PC-9 (cell line): ENCODE measurements at regions of chr3 and their contacts with region 1.

Region 1: GRCh38 chr3:96209695-96210094 is 604.7 kb upstream of the EPHA6 start:
- DNase-seq: peak in 1 of 2 experiments; percentile 49
- H3K4me3 ChIP-seq: no peak overlapping the region
- H3K27ac ChIP-seq: peak overlapping the region; percentile 14; the same call in 1 of the 2 replicates
- H3K4me1 ChIP-seq: peaks cover 8% of the 10 kb centered on the region; the same call in 1 of the 2 replicates
- H3K27me3 ChIP-seq: no peaks in the 10 kb centered on the region
- CTCF ChIP-seq: no peak

Region 2: GRCh38 chr3:95350049-95350448 is 859.6 kb before region 1 on chr3:
- CTCF ChIA-PET with region 1: no interaction called
- POLR2A ChIA-PET with region 1: interaction called, 22 read pairs
- intact Hi-C with region 1: no loop called
- DNase-seq: no peak
- H3K4me3 ChIP-seq: no peak overlapping the region
- H3K27ac ChIP-seq: no peak overlapping the region
- H3K4me1 ChIP-seq: no peaks in the 10 kb centered on the region
- H3K27me3 ChIP-seq: no peaks in the 10 kb centered on the region
- CTCF ChIP-seq: no peak